OCI-LY7 (cell line): ENCODE measurements at regions of chr6 and their contacts with region 1.

Region 1: GRCh38 chr6:34671801-34672656 is 24.5 kb downstream of the ILRUN start:
- DNase-seq: peak; percentile 74
- H3K4me3 ChIP-seq: peak overlapping the region; percentile 54
- H3K27ac ChIP-seq: peak overlapping the region; percentile 99
- H3K4me1 ChIP-seq: peaks cover 85% of the 10 kb centered on the region
- CTCF ChIP-seq: no peak

Region 2: GRCh38 chr6:33613795-33614168 is 1058.2 kb before region 1 on chr6:
- CTCF ChIA-PET with region 1: no interaction called
- POLR2A ChIA-PET with region 1: no interaction called
- intact Hi-C with region 1: no loop called
- DNase-seq: no peak
- H3K4me3 ChIP-seq: no peak overlapping the region
- H3K27ac ChIP-seq: no peak overlapping the region
- H3K4me1 ChIP-seq: peaks cover 23% of the 10 kb centered on the region
- CTCF ChIP-seq: no peak

Region 3: DNA sequence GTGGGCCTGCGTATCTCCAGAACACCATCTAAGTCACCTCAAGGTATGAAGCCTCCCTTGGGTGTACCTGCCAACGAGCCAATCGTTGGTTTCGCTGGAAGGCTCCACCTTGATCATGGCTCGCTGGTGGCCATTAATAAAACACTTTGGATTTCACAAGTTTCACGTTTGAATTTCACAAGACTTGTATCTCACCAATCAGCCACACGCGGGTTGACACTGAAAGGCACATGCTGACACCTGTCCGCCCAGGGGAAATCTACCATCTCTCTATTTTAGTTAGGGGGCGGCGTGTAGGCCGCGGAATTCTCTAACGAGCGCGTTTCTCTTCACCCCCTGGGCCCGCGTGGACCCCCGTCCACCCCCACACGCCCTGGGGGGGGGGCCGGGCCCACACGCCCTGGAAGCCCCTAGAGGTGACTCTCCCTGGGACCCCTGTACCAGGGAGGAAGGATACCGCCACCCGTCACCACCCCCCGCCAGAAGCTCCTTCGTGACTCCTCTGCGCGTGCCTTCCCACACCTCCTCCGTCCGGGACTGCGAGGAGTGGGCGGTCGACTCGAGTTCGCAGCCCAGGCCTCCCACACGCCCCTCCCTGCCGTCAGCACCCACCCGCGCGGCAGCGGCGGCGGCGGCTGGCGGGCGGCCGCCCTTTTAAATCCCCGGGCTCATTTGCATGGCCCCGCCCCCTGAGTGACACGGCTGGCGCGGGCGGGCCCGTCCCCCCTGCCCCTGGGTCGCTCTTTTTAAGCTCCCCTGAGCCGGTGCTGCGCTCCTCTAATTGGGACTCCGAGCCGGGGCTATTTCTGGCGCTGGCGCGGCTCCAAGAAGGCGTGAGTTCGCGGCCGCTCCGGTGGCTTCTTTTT is 435.7 kb before region 1 on chr6 and contains the start of gene HMGA1:
- CTCF ChIA-PET with region 1: no interaction called
- POLR2A ChIA-PET with region 1: no interaction called
- intact Hi-C with region 1: loop called (anchors 10 kb)
- DNase-seq: peak; percentile 97
- H3K4me3 ChIP-seq: peak within 1 kb of the TSS; percentile 97
- H3K27ac ChIP-seq: peak within 1 kb of the TSS; percentile 91
- H3K4me1 ChIP-seq: peaks cover 42% of the 10 kb centered on the region
- CTCF ChIP-seq: no peak
- total RNA-seq, gene HMGA1: 435 and 463 TPM in 2 replicates

Region 4: DNA sequence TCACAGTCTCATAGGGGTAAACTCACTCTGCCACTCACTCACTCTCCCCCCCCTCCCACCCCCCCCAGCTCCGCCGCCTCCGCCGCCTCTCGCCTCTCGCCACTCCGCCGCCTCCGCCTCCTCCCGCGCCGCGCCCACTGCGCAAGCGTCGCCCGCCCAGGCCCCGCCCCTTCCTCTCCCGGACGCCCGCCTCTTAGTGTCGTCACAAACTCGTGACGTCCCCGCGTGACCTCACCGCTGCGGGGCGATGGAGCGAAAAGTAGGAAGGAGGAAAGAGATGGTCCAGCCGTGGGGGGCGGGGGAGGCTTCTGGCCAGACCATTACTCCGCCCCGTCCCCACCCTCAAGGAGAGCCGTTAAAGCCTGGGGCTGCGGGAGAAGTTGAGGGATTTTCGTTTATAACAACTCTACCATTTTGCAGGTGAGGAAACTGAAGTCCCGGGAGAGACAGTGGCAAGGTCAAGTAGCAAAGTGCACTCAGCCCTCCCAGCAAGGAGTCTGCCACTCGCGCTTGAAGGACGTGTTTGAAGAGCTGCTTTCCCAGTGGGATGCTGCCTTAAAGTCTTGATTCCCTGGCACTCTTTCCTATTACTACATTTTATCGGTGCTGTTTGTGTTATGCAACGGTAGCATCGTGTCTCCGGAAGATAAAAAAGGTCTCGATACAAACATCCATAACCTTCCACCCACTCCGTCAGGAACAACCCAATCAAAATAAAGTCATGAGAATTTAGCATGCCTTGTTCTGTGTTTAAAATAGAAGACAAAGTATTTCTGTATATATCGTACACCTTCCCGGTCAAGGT is 24.9 kb after region 1 on chr6 and contains the start of gene ILRUN:
- CTCF ChIA-PET with region 1: interaction called, 3 read pairs
- POLR2A ChIA-PET with region 1: interaction called, 12 read pairs
- intact Hi-C with region 1: loop called (anchors 2 kb)
- DNase-seq: peak; percentile 95
- H3K4me3 ChIP-seq: peak within 1 kb of the TSS; percentile 97
- H3K27ac ChIP-seq: peak within 1 kb of the TSS; percentile 65
- H3K4me1 ChIP-seq: peaks cover 44% of the 10 kb centered on the region
- CTCF ChIP-seq: no peak
- total RNA-seq, gene ILRUN: 25.6 and 27.1 TPM in 2 replicates

Region 5: GRCh38 chr6:34757687-34758274 is 85.8 kb after region 1 on chr6:
- CTCF ChIA-PET with region 1: no interaction called
- POLR2A ChIA-PET with region 1: no interaction called
- intact Hi-C with region 1: loop called (anchors 2 kb)
- DNase-seq: no peak
- H3K4me3 ChIP-seq: peak overlapping the region; percentile 82
- H3K27ac ChIP-seq: peak overlapping the region; percentile 79
- H3K4me1 ChIP-seq: peaks cover 28% of the 10 kb centered on the region
- CTCF ChIP-seq: no peak

Region 6: GRCh38 chr6:34887753-34888513 is 215.9 kb after region 1 on chr6 and contains the start of gene TAF11:
- CTCF ChIA-PET with region 1: no interaction called
- POLR2A ChIA-PET with region 1: interaction called, 3 read pairs
- intact Hi-C with region 1: loop called (anchors 10 kb)
- DNase-seq: peak; percentile 94
- H3K4me3 ChIP-seq: peak within 1 kb of the TSS; percentile 97
- H3K27ac ChIP-seq: peak within 1 kb of the TSS; percentile 47
- H3K4me1 ChIP-seq: peaks cover 23% of the 10 kb centered on the region
- CTCF ChIP-seq: no peak
- total RNA-seq, gene TAF11: 30.1 and 30.3 TPM in 2 replicates